Motor neuron (in vitro differentiated cells): ENCODE measurements at regions of chr5 and their contacts with region 1.

Region 1: DNA sequence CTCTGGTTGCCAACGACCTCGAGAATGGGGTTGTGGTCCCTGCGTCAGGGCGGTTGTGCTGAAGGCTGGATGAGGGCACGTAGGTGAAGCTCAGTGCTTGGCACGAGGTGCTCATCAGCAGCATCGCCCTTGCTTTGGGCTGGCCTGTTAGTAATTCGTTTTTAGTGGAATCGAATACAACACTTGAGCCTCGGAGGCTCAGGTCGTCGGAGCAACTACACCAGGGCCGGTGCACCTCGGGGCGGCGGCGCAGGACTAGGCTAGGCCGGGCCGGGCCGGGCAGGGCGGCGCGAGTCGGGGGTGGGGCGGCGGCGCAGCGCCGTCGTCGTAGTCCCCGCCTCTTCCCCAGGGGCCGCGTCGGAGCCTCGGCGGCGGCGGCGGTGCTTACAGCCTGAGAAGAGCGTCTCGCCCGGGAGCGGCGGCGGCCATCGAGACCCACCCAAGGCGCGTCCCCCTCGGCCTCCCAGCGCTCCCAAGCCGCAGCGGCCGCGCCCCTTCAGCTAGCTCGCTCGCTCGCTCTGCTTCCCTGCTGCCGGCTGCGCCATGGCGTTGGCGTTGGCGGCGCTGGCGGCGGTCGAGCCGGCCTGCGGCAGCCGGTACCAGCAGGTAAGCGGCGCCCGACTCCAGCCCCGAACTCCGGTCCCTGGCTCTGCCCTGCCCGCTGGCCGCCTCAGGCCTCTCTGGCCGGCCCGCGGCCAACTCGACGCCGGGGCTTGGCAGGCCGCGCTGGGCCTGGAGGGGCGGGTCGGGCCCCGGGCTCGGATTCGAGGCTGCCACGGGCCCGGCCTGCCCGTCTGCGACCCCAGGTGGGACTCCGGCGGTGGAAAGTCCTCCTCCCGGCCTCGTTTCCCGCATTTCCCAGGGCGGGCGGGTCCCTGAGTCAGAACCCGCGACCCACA is at the start of gene NDFIP1:
- ATAC-seq: peak; percentile 87 to 98 (median 97)
- H3K4me3 ChIP-seq: peak within 1 kb of the TSS; percentile 63 to 89 (median 73)
- H3K27ac ChIP-seq: peak within 1 kb of the TSS; percentile 94 to 97
- H3K4me1 ChIP-seq: peaks cover 4 to 11% of the 10 kb centered on the region in 2 donors
- total RNA-seq, gene NDFIP1: 54.4 to 134 (median 84.0) TPM

Region 2: GRCh38 chr5:142012792-142013388 is 95.8 kb before region 1 on chr5 and contains the start of gene GNPDA1:
- in situ Hi-C with region 1: loop called in 4 of 9 experiments (anchors 10 to 25 kb)
- ATAC-seq: peak; percentile 74 to 97 (median 96)
- H3K4me3 ChIP-seq: peak within 1 kb of the TSS; percentile 45 to 69 (median 55)
- H3K27ac ChIP-seq: peak within 1 kb of the TSS; percentile 66 to 81
- H3K4me1 ChIP-seq: peaks cover 8 to 10% of the 10 kb centered on the region in 2 donors
- total RNA-seq, gene GNPDA1: 26.6 to 93.3 (median 35.9) TPM

Region 3: GRCh38 chr5:142024771-142025304 is 83.8 kb before region 1 on chr5:
- in situ Hi-C with region 1: loop called in 3 of 9 experiments (anchors 25 kb)
- ATAC-seq: peak; percentile 100
- H3K4me3 ChIP-seq: peak overlapping the region; percentile 34 to 42 (median 37)
- H3K27ac ChIP-seq: peak overlapping the region; percentile 76 to 91
- H3K4me1 ChIP-seq: peaks cover 0 to 4% of the 10 kb centered on the region in 2 donors